MCF 10A (cell line): ENCODE measurements at regions of chr6 and their contacts with region 1.

Region 1: GRCh38 chr6:165439928-165440554 is 130.6 kb upstream of the C6orf118 start:
- DNase-seq: peak; percentile 54
- H3K4me3 Mint-ChIP-seq: no peak overlapping the region
- H3K27ac Mint-ChIP-seq: no peak overlapping the region
- H3K4me1 Mint-ChIP-seq: no peaks in the 10 kb centered on the region
- H3K27me3 Mint-ChIP-seq: no peaks in the 10 kb centered on the region
- CTCF ChIP-seq: peak; percentile 57

Region 2: GRCh38 chr6:165456286-165456685 is 16.2 kb after region 1 on chr6:
- CTCF ChIA-PET with region 1: interaction called, 12 read pairs
- POLR2A ChIA-PET with region 1: no interaction called
- intact Hi-C with region 1: no loop called
- DNase-seq: no peak
- H3K4me3 Mint-ChIP-seq: no peak overlapping the region
- H3K27ac Mint-ChIP-seq: no peak overlapping the region
- H3K4me1 Mint-ChIP-seq: no peaks in the 10 kb centered on the region
- H3K27me3 Mint-ChIP-seq: no peaks in the 10 kb centered on the region
- CTCF ChIP-seq: no peak

Region 3: DNA sequence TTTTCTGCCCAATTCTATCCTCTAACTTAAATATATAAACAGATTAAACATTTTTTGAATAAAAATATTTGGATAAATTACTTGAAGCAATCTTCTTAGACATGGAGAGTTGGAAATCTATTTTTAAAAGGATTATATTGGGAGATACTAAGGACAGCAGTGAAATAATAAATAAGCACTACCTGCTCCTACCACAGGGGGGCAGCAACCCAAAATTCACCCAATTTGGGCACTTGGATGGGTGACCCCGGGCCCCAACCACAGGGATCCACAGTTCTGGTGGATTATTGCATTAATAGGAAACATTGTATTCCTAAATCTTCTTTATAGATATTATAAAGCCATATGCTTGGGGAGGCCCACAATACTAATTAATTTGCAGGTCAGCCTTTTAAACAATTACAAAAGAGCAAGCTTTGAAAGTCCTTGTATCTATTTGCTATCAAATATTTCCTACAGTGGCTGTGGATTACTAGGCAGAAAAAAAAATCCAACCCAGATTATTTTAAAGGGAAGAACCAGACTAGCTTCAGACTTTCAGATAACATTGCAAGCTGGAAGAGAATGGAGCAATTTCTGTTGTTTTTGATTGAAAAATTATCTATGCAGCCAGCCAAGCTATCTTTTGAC is 289.4 kb after region 1 on chr6:
- CTCF ChIA-PET with region 1: interaction called, 24 read pairs
- POLR2A ChIA-PET with region 1: no interaction called
- intact Hi-C with region 1: loop called (anchors 1 kb)
- DNase-seq: peak; percentile 54
- H3K4me3 Mint-ChIP-seq: no peak overlapping the region
- H3K27ac Mint-ChIP-seq: no peak overlapping the region
- H3K4me1 Mint-ChIP-seq: no peaks in the 10 kb centered on the region
- H3K27me3 Mint-ChIP-seq: no peaks in the 10 kb centered on the region
- CTCF ChIP-seq: peak; percentile 60

Region 4: DNA sequence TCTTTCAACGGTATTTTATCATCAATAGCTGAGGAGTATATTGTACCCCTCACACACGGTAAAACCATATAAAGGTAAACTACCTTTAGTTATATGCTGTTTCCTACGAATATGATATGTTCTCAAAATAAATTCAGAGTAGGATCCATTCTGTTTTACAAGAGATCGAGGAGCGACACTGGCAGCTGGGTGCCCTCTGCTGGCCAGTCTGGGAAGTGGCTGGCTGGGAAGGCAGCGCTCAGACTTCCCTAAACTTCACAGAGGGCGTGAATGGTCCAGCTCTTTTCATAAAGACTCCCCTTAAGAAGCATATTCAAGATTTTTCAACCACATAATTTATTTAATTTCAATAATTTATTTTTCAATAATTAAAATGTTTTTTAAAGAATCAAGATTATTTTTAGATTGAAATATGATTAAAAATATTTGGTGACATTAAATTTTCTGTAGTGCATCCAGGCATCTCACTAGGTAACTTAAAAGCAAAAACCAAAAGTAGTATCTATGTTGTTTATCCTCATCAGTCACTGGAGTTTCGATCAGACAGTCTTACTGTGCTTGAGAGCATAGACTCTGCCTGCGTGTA is 410.5 kb after region 1 on chr6:
- CTCF ChIA-PET with region 1: interaction called, 107 read pairs
- POLR2A ChIA-PET with region 1: interaction called, 3 read pairs
- intact Hi-C with region 1: loop called (anchors 1 kb)
- DNase-seq: peak; percentile 57
- H3K4me3 Mint-ChIP-seq: no peak overlapping the region
- H3K27ac Mint-ChIP-seq: no peak overlapping the region
- H3K4me1 Mint-ChIP-seq: no peaks in the 10 kb centered on the region
- H3K27me3 Mint-ChIP-seq: no peaks in the 10 kb centered on the region
- CTCF ChIP-seq: peak; percentile 85

Region 5: GRCh38 chr6:165861226-165861625 is 421.2 kb after region 1 on chr6:
- CTCF ChIA-PET with region 1: interaction called, 10 read pairs
- POLR2A ChIA-PET with region 1: no interaction called
- intact Hi-C with region 1: no loop called
- DNase-seq: no peak
- H3K4me3 Mint-ChIP-seq: no peak overlapping the region
- H3K27ac Mint-ChIP-seq: no peak overlapping the region
- H3K4me1 Mint-ChIP-seq: no peaks in the 10 kb centered on the region
- H3K27me3 Mint-ChIP-seq: peaks cover 26% of the 10 kb centered on the region
- CTCF ChIP-seq: no peak

Region 6: GRCh38 chr6:166106076-166106686 is 666.1 kb after region 1 on chr6:
- CTCF ChIA-PET with region 1: interaction called, 42 read pairs
- POLR2A ChIA-PET with region 1: no interaction called
- intact Hi-C with region 1: loop called (anchors 1 kb)
- DNase-seq: peak; percentile 75
- H3K4me3 Mint-ChIP-seq: no peak overlapping the region
- H3K27ac Mint-ChIP-seq: no peak overlapping the region
- H3K4me1 Mint-ChIP-seq: peaks cover 13% of the 10 kb centered on the region
- H3K27me3 Mint-ChIP-seq: no peaks in the 10 kb centered on the region
- CTCF ChIP-seq: peak; percentile 92